Activated CD4-positive, alpha-beta T cell treated with anti-CD3 and anti-CD28 coated beads, Interleukin-2, amount 10 ng/mL, durations not matched to agents 24 days and 14 days (primary cell): ENCODE measurements at regions of chr5 and their contacts with region 1.

Region 1: DNA sequence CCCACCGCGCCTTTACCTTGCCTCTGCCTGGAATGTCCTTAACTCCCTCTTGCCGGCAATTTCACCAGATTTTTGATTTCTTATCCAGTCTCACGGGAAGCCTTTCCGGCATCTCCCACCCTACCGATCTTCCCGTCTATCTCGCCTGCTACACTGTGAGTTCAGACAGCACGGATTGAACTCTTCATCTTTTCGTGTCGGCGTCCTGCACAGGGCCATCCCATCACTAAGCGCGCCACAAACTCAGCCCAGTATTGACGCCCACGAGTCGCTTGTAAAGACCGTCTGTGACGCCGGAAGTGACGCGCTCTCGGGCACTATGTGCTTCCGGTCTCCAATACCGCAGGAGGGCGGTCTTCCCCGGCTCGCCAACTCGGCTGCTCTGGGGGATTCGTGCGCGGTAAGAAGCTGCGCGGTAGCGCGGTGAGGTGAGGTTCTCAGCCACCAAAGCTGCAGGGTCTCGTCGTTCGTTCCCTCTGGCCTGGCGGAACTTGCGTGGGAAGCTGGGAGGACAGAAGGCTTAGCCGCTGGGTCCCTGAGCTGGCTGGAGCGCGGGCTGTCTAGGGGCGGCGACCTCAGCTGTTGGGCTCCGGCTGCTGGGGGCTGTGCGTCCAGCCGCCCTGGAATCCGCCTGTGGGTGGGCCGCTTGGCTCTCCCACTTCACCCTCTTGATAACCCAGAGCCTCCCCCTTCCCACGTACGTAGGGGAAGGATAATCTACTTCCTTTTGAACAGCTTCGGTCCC is at the start of gene ZCCHC9:
- DNase-seq: peak; percentile 98
- H3K4me3 Mint-ChIP-seq: peak within 1 kb of the TSS; percentile 90
- H3K27ac Mint-ChIP-seq: peak within 1 kb of the TSS; percentile 96
- H3K4me1 Mint-ChIP-seq: peaks cover 33% of the 10 kb centered on the region
- H3K27me3 Mint-ChIP-seq: no peaks in the 10 kb centered on the region
- total RNA-seq, gene ZCCHC9: 48.5 and 49.7 TPM in 2 replicates

Region 2: GRCh38 chr5:80654391-80655230 is 646.8 kb before region 1 on chr5 and contains the starts of genes DHFR and MSH3:
- intact Hi-C with region 1: loop called (anchors 1 kb)
- DNase-seq: peak; percentile 96
- H3K4me3 Mint-ChIP-seq: peak within 1 kb of the TSS; percentile 84
- H3K27ac Mint-ChIP-seq: peak within 1 kb of the TSS; percentile 93
- H3K4me1 Mint-ChIP-seq: peaks cover 23% of the 10 kb centered on the region
- H3K27me3 Mint-ChIP-seq: no peaks in the 10 kb centered on the region
- total RNA-seq, gene DHFR: 66.5 and 73.4 TPM in 2 replicates
- total RNA-seq, gene MSH3: 21.0 and 21.1 TPM in 2 replicates

Region 3: DNA sequence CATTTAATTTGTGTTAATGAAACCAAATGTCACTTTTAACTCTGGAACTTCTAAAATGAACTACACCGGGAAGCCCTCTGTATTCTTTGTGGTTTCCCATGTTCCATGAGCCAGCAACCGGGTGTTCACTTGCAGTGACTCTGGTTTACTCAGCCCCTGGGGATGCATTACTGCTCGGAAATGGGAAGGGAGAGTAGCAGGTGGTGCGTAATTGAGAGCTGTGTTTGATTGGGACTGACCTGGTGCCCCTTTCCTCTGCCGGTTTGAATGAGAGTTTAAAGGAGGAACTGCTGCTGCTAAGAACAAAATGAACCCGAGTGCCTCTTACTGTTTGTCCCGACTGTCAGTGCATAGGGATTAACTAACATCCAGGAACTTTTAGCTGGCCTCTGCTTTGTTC is 546.5 kb before region 1 on chr5:
- intact Hi-C with region 1: loop called (anchors 10 kb)
- DNase-seq: peak; percentile 79
- H3K4me3 Mint-ChIP-seq: peak overlapping the region; percentile 66
- H3K27ac Mint-ChIP-seq: peak overlapping the region; percentile 96
- H3K4me1 Mint-ChIP-seq: peaks cover 63% of the 10 kb centered on the region
- H3K27me3 Mint-ChIP-seq: no peaks in the 10 kb centered on the region

Region 4: GRCh38 chr5:81194633-81195333 is 106.7 kb before region 1 on chr5:
- intact Hi-C with region 1: loop called (anchors 2 kb)
- DNase-seq: peak; percentile 94
- H3K4me3 Mint-ChIP-seq: peak overlapping the region; percentile 24
- H3K27ac Mint-ChIP-seq: no peak overlapping the region
- H3K4me1 Mint-ChIP-seq: peaks cover 4% of the 10 kb centered on the region
- H3K27me3 Mint-ChIP-seq: no peaks in the 10 kb centered on the region

Region 5: DNA sequence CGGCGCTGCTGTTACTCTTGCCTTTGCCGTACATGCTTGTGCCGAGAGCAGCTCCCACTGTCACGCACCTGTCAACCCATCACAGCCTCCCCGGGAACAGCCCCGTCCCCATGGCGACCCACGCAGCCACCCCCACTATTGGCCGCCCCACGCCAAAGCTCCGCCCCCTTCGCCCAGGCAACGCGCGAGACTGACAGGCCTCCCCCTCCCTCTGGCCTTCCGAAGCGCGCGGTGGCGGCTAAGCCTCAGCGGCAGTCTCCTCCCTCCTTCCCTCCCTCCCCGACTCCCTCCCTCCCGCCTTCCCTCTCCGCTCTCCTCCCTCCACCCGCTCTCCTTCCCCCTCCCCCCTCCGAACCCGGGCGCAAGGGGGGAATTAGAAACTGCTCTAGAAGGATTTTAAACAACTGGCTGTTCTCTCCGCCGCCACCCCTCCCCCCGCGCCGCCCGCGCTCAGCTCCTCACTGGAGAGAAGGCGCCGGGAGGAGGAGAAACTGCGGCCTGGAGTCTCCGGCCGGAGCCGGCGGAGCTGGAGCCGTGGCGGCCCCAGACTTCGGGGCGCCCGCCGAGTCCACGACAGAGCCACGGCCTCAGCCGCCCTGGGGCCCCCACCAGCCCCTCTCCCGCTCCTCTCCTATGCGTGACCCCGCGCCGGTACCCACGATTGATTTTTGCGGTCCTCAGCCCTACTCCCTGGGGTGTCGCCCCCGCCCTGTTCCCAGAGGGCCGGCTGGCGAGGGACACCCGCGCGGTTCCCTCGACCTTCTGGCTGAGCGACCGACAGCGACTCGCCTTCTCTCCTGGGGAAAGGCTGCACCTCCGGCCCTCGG is 449.8 kb after region 1 on chr5 and contains the start of gene SSBP2:
- intact Hi-C with region 1: loop called (anchors 10 kb)
- DNase-seq: peak; percentile 100
- H3K4me3 Mint-ChIP-seq: peak within 1 kb of the TSS; percentile 90
- H3K27ac Mint-ChIP-seq: peak within 1 kb of the TSS; percentile 93
- H3K4me1 Mint-ChIP-seq: peaks cover 12% of the 10 kb centered on the region
- H3K27me3 Mint-ChIP-seq: peaks cover 27% of the 10 kb centered on the region
- total RNA-seq, gene SSBP2: 13.1 and 13.4 TPM in 2 replicates

Region 6: DNA sequence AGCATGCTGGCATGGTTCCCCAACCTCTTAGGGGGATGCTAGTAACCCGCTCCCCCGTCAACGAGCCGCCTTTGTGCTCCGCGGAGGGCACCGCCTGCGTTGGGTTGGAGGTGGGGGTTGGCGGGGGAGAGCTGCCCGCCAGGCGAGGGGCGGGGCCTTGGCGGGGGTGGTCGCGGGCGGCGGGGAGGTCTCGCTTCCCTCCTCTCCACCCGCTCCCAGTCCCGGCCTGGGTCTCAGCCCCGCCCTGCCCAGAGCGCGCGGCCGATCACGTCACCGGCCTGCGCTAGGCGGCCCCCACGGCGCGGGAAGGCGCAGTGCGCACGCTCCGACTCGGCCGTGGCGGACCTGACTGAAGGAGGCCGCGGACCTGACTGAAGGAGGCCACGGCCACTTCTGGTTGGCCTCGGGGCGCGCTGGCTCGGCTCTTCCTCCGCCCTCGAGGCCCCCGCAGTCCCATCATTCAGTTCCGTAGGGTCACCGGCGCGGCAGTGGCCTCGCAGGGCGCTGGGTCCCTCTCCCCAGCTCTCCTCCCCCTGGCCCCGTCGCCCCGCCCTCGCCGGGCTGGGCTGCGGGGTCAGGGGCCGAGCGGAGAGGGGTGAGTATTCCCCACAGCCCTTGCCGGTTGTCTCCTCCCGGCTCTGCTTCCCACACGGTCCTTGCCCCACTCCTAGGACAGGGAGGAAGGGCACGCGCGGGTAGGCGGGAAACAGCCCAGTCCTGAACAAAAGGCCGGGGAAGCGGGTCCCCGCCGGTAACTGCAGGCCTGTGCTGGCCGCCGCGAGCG is 670.5 kb after region 1 on chr5 and contains the start of gene ATG10:
- intact Hi-C with region 1: loop called (anchors 5 kb)
- DNase-seq: peak; percentile 97
- H3K4me3 Mint-ChIP-seq: peak within 1 kb of the TSS; percentile 90
- H3K27ac Mint-ChIP-seq: peak within 1 kb of the TSS; percentile 96
- H3K4me1 Mint-ChIP-seq: peaks cover 25% of the 10 kb centered on the region
- H3K27me3 Mint-ChIP-seq: no peaks in the 10 kb centered on the region
- total RNA-seq, gene ATG10: 5.8 and 5.9 TPM in 2 replicates

Region 7: DNA sequence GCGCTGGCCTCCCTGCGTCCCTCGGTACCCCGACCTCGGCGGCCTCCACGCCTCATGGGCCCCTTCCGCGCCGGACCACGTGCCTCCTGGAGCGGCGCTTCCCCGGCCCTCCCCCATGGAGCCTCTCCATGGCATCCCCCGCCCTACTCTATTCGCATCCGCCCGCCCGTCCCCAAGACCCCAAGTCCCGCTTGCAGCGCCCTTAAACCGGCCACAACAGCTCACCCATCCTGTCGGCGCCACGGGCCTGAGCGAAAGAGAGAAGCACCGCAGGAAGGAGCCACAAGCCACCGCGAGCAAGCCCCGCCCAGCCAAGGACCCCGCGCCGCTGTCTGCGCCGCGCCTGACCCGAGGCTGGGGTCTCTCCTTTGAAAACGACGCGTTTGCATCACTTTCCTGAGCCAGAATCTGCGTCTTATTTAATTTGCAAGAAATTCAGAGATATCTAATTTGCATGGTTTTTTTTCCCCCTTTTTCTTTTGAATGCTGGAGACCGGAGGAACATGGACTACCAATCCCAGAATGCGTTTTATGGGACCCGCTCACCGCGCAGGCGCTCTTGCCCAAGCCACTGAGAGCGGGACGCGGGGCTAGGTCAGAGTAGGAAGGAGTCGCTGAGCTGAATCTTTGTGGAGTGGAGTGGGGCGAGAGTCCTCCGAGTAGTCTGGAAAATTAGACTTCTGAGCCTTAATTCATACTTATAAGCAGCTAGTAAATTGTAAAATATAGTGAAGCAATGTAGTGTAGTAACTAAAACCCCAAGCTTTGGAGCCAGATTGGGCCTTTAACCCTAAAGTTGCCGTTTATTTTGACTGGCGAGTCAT is 976.9 kb after region 1 on chr5 and contains the start of gene RPS23:
- intact Hi-C with region 1: loop called (anchors 1 kb)
- DNase-seq: peak; percentile 96
- H3K4me3 Mint-ChIP-seq: peak within 1 kb of the TSS; percentile 89
- H3K27ac Mint-ChIP-seq: peak within 1 kb of the TSS; percentile 98
- H3K4me1 Mint-ChIP-seq: peaks cover 32% of the 10 kb centered on the region
- H3K27me3 Mint-ChIP-seq: no peaks in the 10 kb centered on the region
- total RNA-seq, gene RPS23: 2,481 and 2,489 TPM in 2 replicates